ENCODE measurements at regions of chr3 and their contacts with region 1.

Region 1: GRCh38 chr3:4493014-4493940 is at the start of gene ITPR1:
- DNase-seq: peak; percentile 97 to 100
- H3K4me3 ChIP-seq: peak within 1 kb of the TSS; percentile 82 to 84
- H3K27ac ChIP-seq: peak within 1 kb of the TSS; percentile 87 to 93
- H3K4me1 ChIP-seq: peaks cover 0 to 15% of the 10 kb centered on the region in 2 donors
- H3K27me3 ChIP-seq: no peaks in the 10 kb centered on the region
- CTCF ChIP-seq: no peak
- total RNA-seq, gene ITPR1: 121 TPM

Region 2: DNA sequence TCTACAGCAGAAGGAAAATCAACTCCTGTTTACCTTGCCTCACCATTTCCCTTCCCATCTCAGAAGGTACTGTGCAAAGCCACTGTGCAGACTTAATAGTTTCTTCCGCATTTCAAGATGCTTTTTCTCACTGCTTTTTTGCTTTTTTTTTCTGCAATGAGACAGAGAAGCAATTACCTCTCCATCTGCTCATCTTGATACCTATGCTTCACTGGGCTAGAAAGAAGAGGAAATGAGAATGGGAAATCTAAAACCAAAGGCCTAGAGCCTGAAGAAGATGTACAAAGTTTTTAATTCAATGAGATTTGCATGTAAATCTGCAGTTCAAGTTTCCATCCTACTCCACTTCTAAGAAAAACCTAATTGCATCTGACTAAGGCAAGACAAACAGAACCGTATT is 428.2 kb before region 1 on chr3:
- intact Hi-C with region 1: no loop called
- DNase-seq: no peak
- H3K4me3 ChIP-seq: no peak overlapping the region
- H3K27ac ChIP-seq: no peak overlapping the region
- H3K4me1 ChIP-seq: no peaks in the 10 kb centered on the region
- H3K27me3 ChIP-seq: no peaks in the 10 kb centered on the region
- CTCF ChIP-seq: no peak

Region 3: DNA sequence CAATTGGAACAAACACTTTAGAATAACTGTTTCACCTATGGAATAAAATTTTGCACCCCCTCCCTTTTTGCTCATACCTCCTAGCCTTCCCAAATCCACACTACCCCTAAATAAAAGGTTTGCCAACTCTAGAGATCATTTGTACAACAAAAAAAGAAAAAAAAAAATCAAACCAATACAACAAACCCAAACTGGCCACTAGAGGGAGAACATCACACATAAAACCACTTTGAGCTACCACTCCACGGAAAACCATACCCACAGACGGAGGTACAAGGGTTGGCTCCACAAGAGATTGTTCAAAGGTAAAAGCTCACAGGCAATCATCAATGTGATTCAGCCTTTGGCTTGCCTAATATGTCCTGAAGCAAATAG is 142.5 kb before region 1 on chr3:
- intact Hi-C with region 1: loop called (anchors 1 kb)
- DNase-seq: peak in 1 of 2 donors; percentile 68
- H3K4me3 ChIP-seq: peak overlapping the region; percentile 45 to 60
- H3K27ac ChIP-seq: peak overlapping the region; percentile 88 to 92
- H3K4me1 ChIP-seq: peaks cover 0 to 3% of the 10 kb centered on the region in 2 donors
- H3K27me3 ChIP-seq: no peaks in the 10 kb centered on the region
- CTCF ChIP-seq: peak; percentile 58 to 76 (median 67)

Region 4: GRCh38 chr3:4466741-4467521 is 26.3 kb before region 1 on chr3 and contains the start of gene SUMF1:
- intact Hi-C with region 1: loop called (anchors 2 kb)
- DNase-seq: peak; percentile 46 to 90
- H3K4me3 ChIP-seq: peak within 1 kb of the TSS; percentile 70
- H3K27ac ChIP-seq: peak within 1 kb of the TSS; percentile 48 to 75
- H3K4me1 ChIP-seq: peaks cover 4 to 11% of the 10 kb centered on the region in 2 donors
- H3K27me3 ChIP-seq: no peaks in the 10 kb centered on the region
- CTCF ChIP-seq: no peak
- total RNA-seq, gene SUMF1: 98.4 TPM

Region 5: GRCh38 chr3:4512895-4513616 is 19.8 kb after region 1 on chr3:
- intact Hi-C with region 1: no loop called
- DNase-seq: no peak
- H3K4me3 ChIP-seq: no peak overlapping the region
- H3K27ac ChIP-seq: peak overlapping the region; percentile 10 to 35
- H3K4me1 ChIP-seq: peaks cover 8 to 30% of the 10 kb centered on the region in 2 donors
- H3K27me3 ChIP-seq: no peaks in the 10 kb centered on the region
- CTCF ChIP-seq: no peak

Region 6: GRCh38 chr3:4524088-4525023 is 31.1 kb after region 1 on chr3:
- intact Hi-C with region 1: loop called (anchors 1 kb)
- DNase-seq: no peak
- H3K4me3 ChIP-seq: peak overlapping the region in 1 of 2 donors; percentile 13
- H3K27ac ChIP-seq: peak overlapping the region; percentile 53 to 63
- H3K4me1 ChIP-seq: peaks cover 2 to 34% of the 10 kb centered on the region in 2 donors
- H3K27me3 ChIP-seq: no peaks in the 10 kb centered on the region
- CTCF ChIP-seq: no peak

Region 7: GRCh38 chr3:4633078-4634004 is 140.1 kb after region 1 on chr3:
- intact Hi-C with region 1: loop called (anchors 2 kb)
- DNase-seq: no peak
- H3K4me3 ChIP-seq: no peak overlapping the region
- H3K27ac ChIP-seq: peak overlapping the region in 1 of 2 donors; percentile 40
- H3K4me1 ChIP-seq: no peaks in the 10 kb centered on the region
- H3K27me3 ChIP-seq: no peaks in the 10 kb centered on the region
- CTCF ChIP-seq: peak; percentile 73 to 81 (median 78)

Measured in ascending aorta (tissue), 2 donors.